Mucosa of descending colon (tissue), 3 donors: ENCODE measurements at regions of chr12 and their contacts with region 1.

Region 1: GRCh38 chr12:21989819-21990412 is 48.7 kb upstream of the ABCC9 start:
- DNase-seq: peak in 1 of 3 donors; percentile 15
- ATAC-seq: no peak
- H3K4me3 ChIP-seq: no peak overlapping the region
- H3K4me1 ChIP-seq: no peaks in the 10 kb centered on the region
- CTCF ChIP-seq: no peak

Region 2: GRCh38 chr12:21690704-21691368 is 299.1 kb before region 1 on chr12:
- intact Hi-C with region 1: loop called (anchors 5 to 10 kb)
- DNase-seq: no peak
- ATAC-seq: no peak
- H3K4me3 ChIP-seq: no peak overlapping the region
- H3K4me1 ChIP-seq: no peaks in the 10 kb centered on the region
- CTCF ChIP-seq: no peak

Region 3: DNA sequence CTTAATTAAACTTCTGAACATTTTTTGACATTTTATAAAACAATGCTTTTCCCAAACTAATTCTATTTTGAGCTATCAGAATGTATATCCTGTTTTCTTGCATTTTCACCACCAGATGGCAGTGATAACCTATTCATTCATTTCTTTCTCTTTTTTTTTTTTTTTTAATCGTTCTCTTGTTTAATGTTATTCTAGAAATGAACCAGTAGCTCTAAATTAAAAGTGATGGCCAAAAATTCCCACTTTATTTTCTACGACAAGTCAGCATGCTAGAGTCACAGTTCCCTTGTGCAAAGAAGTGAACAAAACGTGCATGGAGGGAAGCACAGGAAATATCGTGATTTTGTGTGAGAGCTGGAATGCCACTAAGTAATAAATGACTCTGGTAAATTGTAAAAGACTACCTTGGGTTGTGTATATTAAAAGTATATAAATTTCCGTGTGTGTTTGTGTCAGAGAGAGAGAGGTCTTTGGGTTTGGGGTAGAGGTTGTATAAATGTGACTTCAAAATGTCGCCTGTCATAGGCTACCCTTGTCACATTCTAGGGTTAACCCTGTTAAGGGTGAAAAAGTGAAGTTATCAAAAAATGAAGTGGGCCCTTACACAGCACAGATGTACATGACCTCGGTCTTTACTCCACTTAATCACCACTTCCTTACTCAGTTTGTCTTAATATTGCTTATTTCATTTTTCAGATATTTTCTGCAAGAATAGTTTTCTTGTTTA is 291.8 kb before region 1 on chr12:
- intact Hi-C with region 1: loop called (anchors 5 to 10 kb)
- DNase-seq: peak in 1 of 3 donors; percentile 41
- ATAC-seq: no peak
- H3K4me3 ChIP-seq: no peak overlapping the region
- H3K4me1 ChIP-seq: no peaks in the 10 kb centered on the region
- CTCF ChIP-seq: no peak

Region 4: GRCh38 chr12:21939435-21939834 is 50.5 kb before region 1 on chr12:
- intact Hi-C with region 1: no loop called
- DNase-seq: no peak
- ATAC-seq: no peak
- H3K4me3 ChIP-seq: no peak overlapping the region
- H3K4me1 ChIP-seq: no peaks in the 10 kb centered on the region
- CTCF ChIP-seq: no peak

Region 5: GRCh38 chr12:22100958-22101748 is 111.2 kb after region 1 on chr12:
- intact Hi-C with region 1: no loop called
- DNase-seq: peak in 1 of 3 donors; percentile 77
- ATAC-seq: peak; percentile 70
- H3K4me3 ChIP-seq: no peak overlapping the region
- H3K4me1 ChIP-seq: no peaks in the 10 kb centered on the region
- CTCF ChIP-seq: no peak

Region 6: DNA sequence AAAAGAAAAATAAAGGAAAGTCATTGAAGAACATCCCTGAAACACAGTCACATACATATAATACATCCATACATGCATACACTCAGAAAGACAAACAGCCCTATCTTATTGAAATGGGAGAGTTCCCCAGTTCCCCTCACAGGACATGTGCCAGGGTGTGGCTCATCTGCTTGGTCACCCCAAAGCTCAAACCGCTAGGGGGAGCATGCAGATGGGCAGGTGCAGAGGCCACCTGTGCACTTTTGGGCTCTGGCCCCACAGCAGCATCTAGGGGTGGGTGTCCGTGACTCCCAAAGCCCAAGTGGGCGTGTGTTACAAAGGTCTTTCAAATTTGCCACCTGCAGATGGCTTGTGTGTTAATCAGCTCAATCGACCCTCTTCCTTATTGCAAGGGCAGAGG is 131.3 kb after region 1 on chr12:
- intact Hi-C with region 1: no loop called
- DNase-seq: peak in 2 of 3 donors; percentile 28 to 35
- ATAC-seq: no peak
- H3K4me3 ChIP-seq: no peak overlapping the region
- H3K4me1 ChIP-seq: no peaks in the 10 kb centered on the region
- CTCF ChIP-seq: no peak